Natural killer cell (primary cell): ENCODE measurements at regions of chr11 and their contacts with region 1.

Region 1: GRCh38 chr11:36376888-36377758 is 81.0 kb downstream of the PRR5L start:
- DNase-seq: peak; percentile 69 to 76
- ATAC-seq: peak; percentile 63 to 82 (median 72)
- H3K4me3 ChIP-seq: peak overlapping the region; percentile 72
- H3K4me3 Mint-ChIP-seq: peak overlapping the region; percentile 91
- H3K27ac ChIP-seq: peak overlapping the region; percentile 85
- H3K27ac Mint-ChIP-seq: peak overlapping the region; percentile 90 to 93
- H3K4me1 ChIP-seq: peaks cover 44% of the 10 kb centered on the region
- H3K4me1 Mint-ChIP-seq: peaks cover 60 to 63% of the 10 kb centered on the region in 2 donors
- H3K27me3 ChIP-seq: no peaks in the 10 kb centered on the region
- H3K27me3 Mint-ChIP-seq: no peaks in the 10 kb centered on the region
- CTCF ChIP-seq: peak; percentile 84

Region 2: DNA sequence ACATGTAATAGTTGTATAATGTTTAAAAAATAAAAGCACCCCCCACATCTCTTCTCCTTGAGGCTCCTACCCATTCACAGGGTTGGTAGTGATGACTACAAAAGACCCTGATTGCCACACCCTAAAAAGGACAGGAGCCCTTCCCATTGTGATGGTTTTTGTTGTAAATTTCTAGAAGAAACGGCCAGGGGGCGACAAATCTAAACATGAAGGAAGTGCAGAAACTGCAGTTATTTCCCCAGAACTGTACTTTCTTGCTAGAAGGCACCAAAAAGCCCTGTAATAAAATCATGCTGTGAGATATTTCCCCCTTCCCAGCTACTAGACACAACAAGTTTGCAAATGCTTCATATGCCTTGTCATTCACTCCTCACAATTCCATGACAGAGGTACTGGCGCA is 70.2 kb before region 1 on chr11:
- intact Hi-C with region 1: loop called (anchors 10 kb)
- DNase-seq: peak in 1 of 2 donors; percentile 43
- ATAC-seq: peak in 2 of 3 donors; percentile 29 to 47
- H3K4me3 ChIP-seq: no peak overlapping the region
- H3K4me3 Mint-ChIP-seq: peak overlapping the region; percentile 38
- H3K27ac ChIP-seq: no peak overlapping the region
- H3K27ac Mint-ChIP-seq: peak overlapping the region; percentile 27 to 31
- H3K4me1 ChIP-seq: no peaks in the 10 kb centered on the region
- H3K4me1 Mint-ChIP-seq: peaks cover 20 to 21% of the 10 kb centered on the region in 2 donors
- H3K27me3 ChIP-seq: no peaks in the 10 kb centered on the region
- H3K27me3 Mint-ChIP-seq: peaks cover 11 to 16% of the 10 kb centered on the region in 2 donors
- CTCF ChIP-seq: peak; percentile 59

Region 3: GRCh38 chr11:36394056-36394455 is 16.9 kb after region 1 on chr11:
- intact Hi-C with region 1: loop called (anchors 2 kb)
- DNase-seq: peak in 1 of 2 donors; percentile 50
- ATAC-seq: peak in 2 of 3 donors; percentile 15 to 35
- H3K4me3 ChIP-seq: no peak overlapping the region
- H3K4me3 Mint-ChIP-seq: peak overlapping the region; percentile 35
- H3K27ac ChIP-seq: peak overlapping the region; percentile 7
- H3K27ac Mint-ChIP-seq: peak overlapping the region; percentile 90 to 93
- H3K4me1 ChIP-seq: peaks cover 47% of the 10 kb centered on the region
- H3K4me1 Mint-ChIP-seq: peaks cover 73 to 82% of the 10 kb centered on the region in 2 donors
- H3K27me3 ChIP-seq: no peaks in the 10 kb centered on the region
- H3K27me3 Mint-ChIP-seq: no peaks in the 10 kb centered on the region
- CTCF ChIP-seq: no peak

Region 4: DNA sequence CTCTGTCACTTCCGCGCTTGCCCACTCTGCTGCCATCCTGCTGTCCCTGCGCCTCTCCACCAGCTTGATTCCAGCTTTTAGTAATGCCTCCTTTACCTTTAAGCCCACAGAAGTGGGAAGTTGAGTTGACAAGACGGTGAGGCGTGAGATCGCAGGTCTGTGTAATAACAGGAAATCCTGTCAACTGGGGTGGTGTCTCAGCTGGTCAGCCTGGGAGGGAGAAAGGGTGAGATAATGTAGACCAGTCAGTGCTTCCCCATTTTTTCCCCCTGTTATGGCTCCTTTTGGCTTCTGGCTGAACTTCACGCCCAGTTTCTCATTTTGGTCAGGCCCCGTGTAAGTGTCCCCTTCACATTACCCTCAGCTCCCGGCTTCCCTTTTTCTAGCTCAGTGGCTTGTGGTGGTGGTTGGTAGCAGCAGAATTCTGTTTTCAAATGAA is 34.1 kb after region 1 on chr11:
- intact Hi-C with region 1: loop called (anchors 1 kb)
- DNase-seq: peak; percentile 40 to 61
- ATAC-seq: peak; percentile 71 to 91 (median 78)
- H3K4me3 ChIP-seq: no peak overlapping the region
- H3K4me3 Mint-ChIP-seq: peak overlapping the region; percentile 94
- H3K27ac ChIP-seq: peak overlapping the region; percentile 80
- H3K27ac Mint-ChIP-seq: peak overlapping the region; percentile 97 to 99
- H3K4me1 ChIP-seq: peaks cover 69% of the 10 kb centered on the region
- H3K4me1 Mint-ChIP-seq: peaks cover 79 to 83% of the 10 kb centered on the region in 2 donors
- H3K27me3 ChIP-seq: no peaks in the 10 kb centered on the region
- H3K27me3 Mint-ChIP-seq: no peaks in the 10 kb centered on the region
- CTCF ChIP-seq: no peak

Region 5: GRCh38 chr11:36425561-36426081 is 48.5 kb after region 1 on chr11:
- intact Hi-C with region 1: loop called (anchors 2 kb)
- DNase-seq: no peak
- ATAC-seq: no peak
- H3K4me3 ChIP-seq: no peak overlapping the region
- H3K4me3 Mint-ChIP-seq: peak overlapping the region; percentile 75
- H3K27ac ChIP-seq: peak overlapping the region; percentile 65
- H3K27ac Mint-ChIP-seq: peak overlapping the region; percentile 89 to 97
- H3K4me1 ChIP-seq: peaks cover 63% of the 10 kb centered on the region
- H3K4me1 Mint-ChIP-seq: peaks cover 70 to 78% of the 10 kb centered on the region in 2 donors
- H3K27me3 ChIP-seq: no peaks in the 10 kb centered on the region
- H3K27me3 Mint-ChIP-seq: no peaks in the 10 kb centered on the region
- CTCF ChIP-seq: no peak

Region 6: DNA sequence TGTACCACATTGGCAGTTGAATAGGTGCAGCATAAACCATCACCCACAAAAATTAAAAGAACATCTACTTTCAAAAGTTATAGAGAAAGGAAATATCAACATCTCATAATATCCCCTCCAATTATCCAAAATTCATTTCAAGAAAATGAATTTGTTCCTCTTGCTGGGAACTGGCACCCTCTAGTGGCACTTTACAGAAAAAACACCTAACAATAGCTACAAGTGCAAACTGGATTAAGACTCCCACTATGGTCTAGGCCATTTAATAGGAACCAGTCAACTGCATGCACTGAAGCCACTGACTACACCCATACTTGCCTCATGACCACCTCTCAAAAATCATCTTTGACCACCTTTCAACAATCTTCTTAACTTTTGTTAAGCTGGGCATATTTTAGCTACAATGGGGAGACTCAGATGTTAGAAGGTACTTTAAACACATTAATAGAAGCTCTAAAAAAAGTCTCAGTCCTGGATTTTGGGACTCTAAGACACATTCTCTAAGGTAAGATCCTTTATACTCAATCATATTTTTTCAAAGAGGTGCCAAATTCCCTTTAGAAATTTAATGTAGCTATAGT is 115.7 kb after region 1 on chr11:
- intact Hi-C with region 1: loop called (anchors 2 kb)
- DNase-seq: peak in 1 of 2 donors; percentile 81
- ATAC-seq: peak; percentile 72 to 79 (median 75)
- H3K4me3 ChIP-seq: no peak overlapping the region
- H3K4me3 Mint-ChIP-seq: no peak overlapping the region
- H3K27ac ChIP-seq: no peak overlapping the region
- H3K27ac Mint-ChIP-seq: peak overlapping the region; percentile 62 to 68
- H3K4me1 ChIP-seq: peaks cover 5% of the 10 kb centered on the region
- H3K4me1 Mint-ChIP-seq: peaks cover 25 to 29% of the 10 kb centered on the region in 2 donors
- H3K27me3 ChIP-seq: no peaks in the 10 kb centered on the region
- H3K27me3 Mint-ChIP-seq: no peaks in the 10 kb centered on the region
- CTCF ChIP-seq: peak; percentile 86